ENCODE measurements at regions of chr20 and their contacts with region 1.

Region 1: DNA sequence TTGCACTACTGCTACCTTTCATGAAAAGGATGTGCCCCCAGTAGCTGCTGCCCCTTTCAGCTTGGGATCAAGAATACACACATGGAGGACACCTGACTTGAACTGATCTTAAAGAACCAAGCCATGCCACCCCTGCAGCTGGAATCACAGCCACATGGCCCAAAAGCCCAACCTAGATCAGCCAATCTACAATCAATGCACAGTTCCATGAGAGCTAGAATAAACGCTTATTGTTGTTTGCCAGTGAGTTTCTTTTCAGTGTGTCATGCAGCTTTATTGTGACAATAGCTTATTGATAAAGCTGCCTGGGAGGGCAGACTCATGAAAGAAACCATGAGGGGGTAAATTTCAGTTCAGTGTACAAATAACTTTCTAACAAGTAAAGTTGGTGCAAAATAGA is 397.7 kb downstream of the PTPRT start:
- DNase-seq: peak in 1 of 10 donors; percentile 41
- H3K4me3 ChIP-seq: no peak overlapping the region
- H3K27ac ChIP-seq: peak overlapping the region in 46 of 59 donors; percentile 5 to 84 (median 61)
- H3K27me3 ChIP-seq: no peaks in the 10 kb centered on the region
- CTCF ChIP-seq: peak in 1 of 56 donors; percentile 17

Region 2: GRCh38 chr20:42392442-42392841 is 399.6 kb before region 1 on chr20:
- intact Hi-C with region 1: no loop called
- DNase-seq: no peak
- H3K4me3 ChIP-seq: no peak overlapping the region
- H3K27ac ChIP-seq: no peak overlapping the region
- H3K27me3 ChIP-seq: no peaks in the 10 kb centered on the region
- CTCF ChIP-seq: no peak

Region 3: GRCh38 chr20:42846784-42847490 is 54.9 kb after region 1 on chr20:
- intact Hi-C with region 1: loop called in 1 of 2 experiments (anchors 1 kb)
- DNase-seq: no peak
- H3K4me3 ChIP-seq: peak overlapping the region in 1 of 59 donors; percentile 13
- H3K27ac ChIP-seq: peak overlapping the region in 2 of 59 donors; percentile 32 to 49
- H3K27me3 ChIP-seq: peaks cover 0 to 2% (median 0%) of the 10 kb centered on the region in 45 donors
- CTCF ChIP-seq: no peak